ENCODE measurements at regions of chr9 and their contacts with region 1.

Region 1: GRCh38 chr9:72592502-72593403 is 71.3 kb downstream of the TMC1 start:
- DNase-seq: peak in 12 of 35 experiments; percentile 2 to 76 (median 15)
- ATAC-seq: peak; percentile 59 to 74 (median 70)
- H3K4me3 ChIP-seq: no peak overlapping the region
- H3K4me3 Mint-ChIP-seq: no peak overlapping the region
- H3K27ac ChIP-seq: no peak overlapping the region
- H3K27ac Mint-ChIP-seq: no peak overlapping the region
- H3K4me1 ChIP-seq: no peaks in the 10 kb centered on the region
- H3K4me1 Mint-ChIP-seq: peaks cover 6 to 14% (median 8%) of the 10 kb centered on the region in 3 donors
- H3K27me3 ChIP-seq: no peaks in the 10 kb centered on the region
- H3K27me3 Mint-ChIP-seq: peaks cover 0 to 2% of the 10 kb centered on the region in 2 donors

Region 2: DNA sequence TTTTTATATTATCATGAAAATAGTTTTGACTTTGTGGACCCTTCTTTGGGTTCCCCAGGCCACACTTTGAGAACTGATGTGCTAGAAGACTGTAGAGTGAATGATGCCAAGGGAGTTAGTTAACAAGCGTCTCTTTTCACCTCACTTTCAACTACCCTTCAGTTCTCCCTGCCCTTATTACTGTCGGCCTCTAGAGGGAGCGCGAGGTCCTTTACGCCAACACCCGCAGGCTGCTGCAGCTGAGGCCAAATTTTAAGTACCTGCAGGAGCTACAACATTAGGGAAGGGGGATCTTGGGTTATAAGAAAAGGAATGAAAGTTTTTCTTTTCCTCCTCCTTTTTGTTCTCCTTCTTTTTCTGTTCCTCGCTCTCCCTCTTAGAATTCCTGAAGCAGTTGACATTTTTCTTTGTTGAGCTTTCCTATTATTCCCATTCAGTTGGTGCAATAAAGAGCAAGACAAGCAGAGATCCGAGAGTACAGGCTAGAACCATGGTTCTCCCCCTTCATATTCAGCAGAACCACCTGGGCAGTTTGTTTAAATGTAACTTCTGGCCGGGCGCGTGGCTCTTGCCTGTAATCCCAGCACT is 311.7 kb before region 1 on chr9:
- CTCF ChIA-PET with region 1: interaction called, 49 to 78 read pairs
- POLR2A ChIA-PET with region 1: no interaction called
- DNase-seq: peak; percentile 20 to 84 (median 57)
- ATAC-seq: peak; percentile 78 to 81 (median 79)
- H3K4me3 ChIP-seq: no peak overlapping the region
- H3K4me3 Mint-ChIP-seq: no peak overlapping the region
- H3K27ac ChIP-seq: no peak overlapping the region
- H3K27ac Mint-ChIP-seq: no peak overlapping the region
- H3K4me1 ChIP-seq: no peaks in the 10 kb centered on the region
- H3K4me1 Mint-ChIP-seq: no peaks in the 10 kb centered on the region
- H3K27me3 ChIP-seq: peaks cover 0 to 2% of the 10 kb centered on the region in 2 experiments
- H3K27me3 Mint-ChIP-seq: peaks cover 0 to 2% of the 10 kb centered on the region in 2 donors

Region 3: GRCh38 chr9:72383978-72384709 is 208.6 kb before region 1 on chr9:
- CTCF ChIA-PET with region 1: interaction called, 4 to 6 read pairs
- POLR2A ChIA-PET with region 1: interaction called in 1 of 2 experiments, 15 read pairs
- DNase-seq: no peak
- ATAC-seq: no peak
- H3K4me3 ChIP-seq: no peak overlapping the region
- H3K4me3 Mint-ChIP-seq: no peak overlapping the region
- H3K27ac ChIP-seq: no peak overlapping the region
- H3K27ac Mint-ChIP-seq: no peak overlapping the region
- H3K4me1 ChIP-seq: peaks cover 0 to 3% of the 10 kb centered on the region in 2 experiments
- H3K4me1 Mint-ChIP-seq: peaks cover 0 to 11% (median 9%) of the 10 kb centered on the region in 3 donors
- H3K27me3 ChIP-seq: no peaks in the 10 kb centered on the region
- H3K27me3 Mint-ChIP-seq: peaks cover 3% of the 10 kb centered on the region in 2 donors

Region 4: DNA sequence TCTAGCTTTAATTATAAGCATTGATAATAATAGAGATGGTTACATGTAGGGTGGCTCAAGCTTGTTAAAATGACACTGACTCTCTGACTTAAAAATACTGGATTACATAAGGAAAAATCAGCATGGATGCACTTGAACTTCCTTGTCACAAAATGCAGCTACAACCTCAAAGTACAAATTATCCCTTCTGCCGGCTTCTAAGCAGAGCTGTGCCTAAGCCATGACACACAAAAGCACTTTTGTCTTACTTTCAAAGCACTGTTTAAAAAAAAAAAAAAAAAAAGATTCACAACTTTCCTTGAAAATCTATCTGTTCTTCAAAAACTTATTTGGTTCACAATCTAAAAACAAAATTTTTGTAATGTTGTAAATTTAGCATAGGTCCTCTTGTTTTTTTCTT is 191.4 kb before region 1 on chr9:
- CTCF ChIA-PET with region 1: no interaction called
- POLR2A ChIA-PET with region 1: no interaction called
- DNase-seq: no peak
- ATAC-seq: no peak
- H3K4me3 ChIP-seq: no peak overlapping the region
- H3K4me3 Mint-ChIP-seq: no peak overlapping the region
- H3K27ac ChIP-seq: no peak overlapping the region
- H3K27ac Mint-ChIP-seq: no peak overlapping the region
- H3K4me1 ChIP-seq: no peaks in the 10 kb centered on the region
- H3K4me1 Mint-ChIP-seq: no peaks in the 10 kb centered on the region
- H3K27me3 ChIP-seq: no peaks in the 10 kb centered on the region
- H3K27me3 Mint-ChIP-seq: peaks cover 0 to 6% of the 10 kb centered on the region in 2 donors

Region 5: GRCh38 chr9:72661401-72662135 is 68.8 kb after region 1 on chr9:
- CTCF ChIA-PET with region 1: no interaction called
- POLR2A ChIA-PET with region 1: no interaction called
- DNase-seq: no peak
- ATAC-seq: no peak
- H3K4me3 ChIP-seq: no peak overlapping the region
- H3K4me3 Mint-ChIP-seq: no peak overlapping the region
- H3K27ac ChIP-seq: no peak overlapping the region
- H3K27ac Mint-ChIP-seq: no peak overlapping the region
- H3K4me1 ChIP-seq: no peaks in the 10 kb centered on the region
- H3K4me1 Mint-ChIP-seq: no peaks in the 10 kb centered on the region
- H3K27me3 ChIP-seq: peaks cover 0 to 5% of the 10 kb centered on the region in 2 experiments
- H3K27me3 Mint-ChIP-seq: peaks cover 6 to 12% of the 10 kb centered on the region in 2 donors

Region 6: GRCh38 chr9:73200694-73201452 is 608.1 kb after region 1 on chr9:
- CTCF ChIA-PET with region 1: interaction called in 1 of 2 experiments, 11 read pairs
- POLR2A ChIA-PET with region 1: interaction called in 1 of 2 experiments, 10 read pairs
- DNase-seq: peak in 1 of 35 experiments; percentile 47
- ATAC-seq: no peak
- H3K4me3 ChIP-seq: no peak overlapping the region
- H3K4me3 Mint-ChIP-seq: no peak overlapping the region
- H3K27ac ChIP-seq: no peak overlapping the region
- H3K27ac Mint-ChIP-seq: no peak overlapping the region
- H3K4me1 ChIP-seq: no peaks in the 10 kb centered on the region
- H3K4me1 Mint-ChIP-seq: no peaks in the 10 kb centered on the region
- H3K27me3 ChIP-seq: peaks cover 0 to 6% of the 10 kb centered on the region in 2 experiments
- H3K27me3 Mint-ChIP-seq: peaks cover 15 to 20% of the 10 kb centered on the region in 2 donors

Measured in T-cell (primary cell).